ENCODE measurements at regions of chr9 and their contacts with region 1.

Region 1: DNA sequence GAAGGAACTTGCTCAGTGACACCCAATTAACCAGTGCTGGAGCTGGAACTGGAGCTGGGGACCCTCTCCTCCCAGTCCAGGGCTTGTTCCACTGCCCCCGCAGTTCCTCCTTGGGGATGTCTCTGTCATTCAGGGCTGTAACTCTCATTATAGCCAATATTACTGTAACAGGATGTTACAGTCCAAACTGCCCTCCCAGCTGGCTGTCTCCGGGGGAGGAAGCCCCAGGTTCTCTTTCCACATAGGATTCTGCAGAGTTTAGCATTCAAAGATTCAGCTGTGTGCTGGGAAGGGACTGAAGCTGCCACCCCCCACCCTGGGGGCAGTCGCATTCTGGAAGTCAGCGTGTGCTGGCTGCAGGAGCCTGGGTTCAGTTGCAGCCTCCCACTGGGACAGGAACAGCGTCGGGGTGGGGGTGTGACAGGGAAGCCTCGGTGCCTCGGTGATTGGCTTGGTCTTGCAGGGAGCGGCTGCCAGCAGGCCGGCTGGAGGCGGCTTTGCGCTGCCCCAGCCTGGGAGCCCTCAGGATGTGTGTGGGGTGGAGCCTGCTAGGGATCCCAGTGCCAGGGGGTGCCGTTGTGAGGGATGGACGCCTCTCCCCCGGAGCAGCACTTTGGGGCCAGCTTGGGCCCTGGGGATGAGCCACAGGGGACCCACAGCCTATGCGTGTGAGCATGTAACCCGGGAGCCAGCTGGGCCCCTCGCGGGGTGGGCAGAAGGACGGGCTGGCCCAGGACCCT is 101.1 kb downstream of the RGS3 start:
- DNase-seq: peak; percentile 75 to 94
- H3K4me3 ChIP-seq: peak overlapping the region; percentile 61 to 69
- H3K27ac ChIP-seq: peak overlapping the region; percentile 88 to 92
- H3K4me1 ChIP-seq: peaks cover 0 to 69% (median 63%) of the 10 kb centered on the region in 4 donors
- H3K27me3 ChIP-seq: no peaks in the 10 kb centered on the region
- CTCF ChIP-seq: no peak

Region 2: DNA sequence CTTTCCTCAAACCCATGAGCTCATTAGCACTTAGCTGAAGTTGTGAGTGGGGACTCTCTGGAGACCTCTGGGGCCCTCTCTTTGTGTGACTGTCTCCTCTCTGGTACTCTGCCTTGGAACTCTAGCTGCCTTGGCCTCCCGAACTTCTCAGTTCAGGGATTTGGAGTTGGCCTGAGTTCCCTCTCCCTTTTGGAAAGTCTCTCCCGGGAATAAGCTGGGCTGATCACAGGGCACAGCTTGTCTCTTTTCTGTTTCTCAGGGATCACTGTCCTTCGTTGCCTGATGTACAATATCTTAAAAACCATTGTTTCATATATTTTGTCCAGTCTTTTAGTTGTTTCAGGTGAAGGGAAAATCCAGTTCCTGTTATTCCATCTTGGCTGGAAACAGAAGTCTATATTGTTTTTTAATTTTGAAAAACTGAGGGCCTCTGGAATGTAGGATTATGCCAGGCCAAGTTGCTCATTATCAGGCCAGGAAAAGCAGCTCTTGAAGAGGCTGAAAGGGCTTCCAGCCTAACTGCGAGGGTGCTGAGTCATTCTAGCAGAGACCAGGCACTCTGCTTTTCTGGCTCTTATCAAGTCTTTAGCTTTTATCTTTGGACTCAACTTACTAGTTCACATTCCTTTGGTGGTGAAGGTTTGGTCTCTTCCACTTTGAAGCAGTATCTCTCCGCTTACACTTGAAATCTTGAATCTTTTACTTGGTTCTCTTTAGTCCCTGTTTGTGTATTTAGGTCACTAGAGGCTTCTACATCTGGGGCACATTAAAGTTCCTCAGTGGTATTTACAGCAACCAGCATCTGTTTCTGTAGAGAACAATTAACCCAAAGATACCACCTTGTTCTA is 109.5 kb before region 1 on chr9:
- intact Hi-C with region 1: loop called (anchors 1 kb)
- DNase-seq: peak; percentile 52 to 83
- H3K4me3 ChIP-seq: peak overlapping the region in 1 of 2 donors; percentile 3
- H3K27ac ChIP-seq: peak overlapping the region; percentile 83 to 89
- H3K4me1 ChIP-seq: peaks cover 3 to 67% (median 36%) of the 10 kb centered on the region in 4 donors
- H3K27me3 ChIP-seq: no peaks in the 10 kb centered on the region
- CTCF ChIP-seq: no peak

Region 3: DNA sequence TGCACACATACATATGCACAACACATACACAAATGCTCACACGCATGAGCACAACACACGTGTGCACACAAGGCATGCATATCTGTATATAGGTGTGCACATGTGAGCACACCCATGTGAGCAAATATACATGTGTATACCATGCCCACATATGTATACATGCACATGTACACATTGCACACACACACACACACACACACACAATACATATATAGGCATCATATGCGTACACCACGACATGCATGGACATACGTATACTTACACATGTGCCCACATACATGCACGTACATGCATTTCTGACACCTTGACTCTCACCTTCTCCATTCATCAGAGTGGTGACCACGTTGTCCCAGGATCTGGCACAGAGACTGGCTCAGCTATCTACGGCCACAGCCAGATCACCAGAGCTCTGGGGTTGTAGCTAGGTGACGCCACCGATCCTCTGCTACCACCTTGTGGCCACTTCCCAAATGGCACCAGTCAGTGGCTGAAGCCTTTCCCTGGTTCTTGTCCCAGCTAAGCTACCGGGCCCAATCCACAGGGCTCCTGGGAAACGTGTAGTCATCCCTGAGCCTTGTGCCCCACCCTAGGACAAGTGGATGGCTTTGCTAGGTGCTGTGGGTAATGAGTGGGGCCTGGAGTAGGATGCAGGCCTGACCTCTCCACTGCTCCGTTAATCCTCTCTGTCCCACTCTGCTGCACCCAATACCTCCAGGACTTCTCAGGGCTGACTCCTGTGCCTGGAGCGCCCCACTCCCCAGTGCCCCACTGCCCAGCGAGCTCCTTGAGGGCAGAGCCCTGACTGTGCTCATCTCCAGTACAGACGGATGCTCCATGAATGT is 93.3 kb after region 1 on chr9:
- intact Hi-C with region 1: no loop called
- DNase-seq: peak; percentile 80 to 90
- H3K4me3 ChIP-seq: no peak overlapping the region
- H3K27ac ChIP-seq: no peak overlapping the region
- H3K4me1 ChIP-seq: peaks cover 0 to 18% (median 12%) of the 10 kb centered on the region in 4 donors
- H3K27me3 ChIP-seq: peaks cover 0 to 16% of the 10 kb centered on the region in 2 donors
- CTCF ChIP-seq: peak; percentile 97